ENCODE measurements at regions of chr12 and their contacts with region 1.

Region 1: GRCh38 chr12:12456637-12457036 is 99.8 kb downstream of the BORCS5 start:
- DNase-seq: no peak
- H3K4me3 Mint-ChIP-seq: peak overlapping the region; percentile 45
- H3K27ac Mint-ChIP-seq: peak overlapping the region; percentile 85
- H3K4me1 Mint-ChIP-seq: peaks cover 41% of the 10 kb centered on the region
- H3K27me3 Mint-ChIP-seq: no peaks in the 10 kb centered on the region

Region 2: GRCh38 chr12:11658791-11659190 is 797.8 kb before region 1 on chr12:
- intact Hi-C with region 1: no loop called
- DNase-seq: no peak
- H3K4me3 Mint-ChIP-seq: peak overlapping the region; percentile 45
- H3K27ac Mint-ChIP-seq: peak overlapping the region; percentile 62
- H3K4me1 Mint-ChIP-seq: peaks cover 78% of the 10 kb centered on the region
- H3K27me3 Mint-ChIP-seq: no peaks in the 10 kb centered on the region

Region 3: GRCh38 chr12:12376646-12377448 is 79.8 kb before region 1 on chr12:
- intact Hi-C with region 1: no loop called
- DNase-seq: peak; percentile 79
- H3K4me3 Mint-ChIP-seq: no peak overlapping the region
- H3K27ac Mint-ChIP-seq: peak overlapping the region; percentile 35
- H3K4me1 Mint-ChIP-seq: peaks cover 23% of the 10 kb centered on the region
- H3K27me3 Mint-ChIP-seq: no peaks in the 10 kb centered on the region

Region 4: DNA sequence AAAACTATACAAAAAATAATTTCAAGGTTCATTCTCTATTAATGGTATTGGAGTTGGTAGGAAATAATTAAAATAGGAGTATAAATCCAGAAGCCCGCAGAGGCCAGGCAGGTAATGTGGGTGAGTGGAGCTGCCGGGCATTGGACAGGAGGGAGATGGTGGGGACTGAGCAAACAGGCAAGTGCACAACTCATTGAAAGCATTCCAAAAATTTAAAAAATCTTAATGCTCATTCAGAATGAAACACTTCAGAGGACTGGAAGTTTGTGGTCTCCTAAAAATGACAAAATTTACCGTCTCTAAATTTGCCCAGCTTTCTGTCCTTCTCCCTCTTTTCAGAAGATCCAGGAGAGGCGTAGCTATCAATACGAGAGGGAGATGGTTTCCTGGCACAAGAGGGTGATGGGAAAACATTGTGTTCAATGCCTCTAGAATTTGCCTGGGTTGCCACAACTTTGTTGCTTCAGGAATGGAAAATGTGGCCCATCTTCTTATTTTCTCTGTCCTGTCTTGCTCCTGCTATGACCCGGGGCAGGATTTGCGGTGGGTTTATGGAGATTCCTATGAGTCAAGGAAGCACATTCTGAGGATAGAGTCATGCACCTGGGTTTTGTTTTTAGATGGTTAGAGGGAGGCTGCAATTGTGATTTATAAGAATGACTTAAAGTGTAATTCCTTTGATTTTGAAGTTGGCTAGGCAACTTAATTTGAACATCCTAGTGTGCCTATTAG is 27.6 kb before region 1 on chr12:
- intact Hi-C with region 1: loop called (anchors 1 kb)
- DNase-seq: no peak
- H3K4me3 Mint-ChIP-seq: no peak overlapping the region
- H3K27ac Mint-ChIP-seq: peak overlapping the region; percentile 70
- H3K4me1 Mint-ChIP-seq: peaks cover 45% of the 10 kb centered on the region
- H3K27me3 Mint-ChIP-seq: no peaks in the 10 kb centered on the region

Region 5: DNA sequence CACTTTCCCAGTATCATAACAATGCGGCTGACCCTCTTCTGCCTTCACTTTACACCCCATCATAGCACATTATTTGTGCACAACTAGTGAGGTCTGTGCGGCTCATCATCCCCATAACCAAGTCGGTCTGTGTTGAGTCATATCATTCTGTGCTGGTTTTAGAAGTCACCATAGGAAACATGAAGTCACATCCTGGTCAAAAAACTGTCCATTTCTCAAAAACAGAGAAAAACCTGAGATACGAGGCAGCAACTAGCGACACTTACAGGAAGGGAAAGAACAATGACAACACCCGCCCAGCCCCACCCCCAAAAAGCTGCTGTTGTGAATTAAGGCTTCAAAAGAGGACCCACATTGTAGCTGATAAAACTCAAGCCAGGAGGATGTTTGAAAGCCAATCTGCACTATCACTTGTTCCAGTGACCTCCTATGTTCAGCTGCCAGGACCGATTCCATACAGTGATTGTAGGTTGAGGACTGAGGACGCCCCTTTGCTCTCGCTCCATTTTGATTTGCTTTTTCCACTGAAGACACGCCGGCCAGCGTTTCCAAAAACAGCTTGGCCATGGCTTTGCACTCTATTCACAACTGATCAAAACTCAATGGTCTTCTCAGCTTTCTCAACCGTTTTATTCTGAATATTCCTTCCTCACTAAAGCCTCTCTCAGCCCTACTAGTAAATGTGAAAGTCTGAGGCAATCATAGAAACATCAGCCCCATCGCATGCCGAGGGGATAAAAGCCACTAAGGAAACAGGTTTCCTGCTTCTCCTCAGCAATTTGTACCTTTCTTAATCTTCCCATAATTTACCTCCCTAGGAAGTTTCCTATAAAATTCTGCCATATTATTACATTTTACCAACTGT is 18.5 kb after region 1 on chr12:
- intact Hi-C with region 1: loop called (anchors 1 kb)
- DNase-seq: peak; percentile 90
- H3K4me3 Mint-ChIP-seq: peak overlapping the region; percentile 78
- H3K27ac Mint-ChIP-seq: peak overlapping the region; percentile 100
- H3K4me1 Mint-ChIP-seq: peaks cover 59% of the 10 kb centered on the region
- H3K27me3 Mint-ChIP-seq: no peaks in the 10 kb centered on the region